ENCODE measurements at regions of chr22 and their contacts with region 1.

Region 1: DNA sequence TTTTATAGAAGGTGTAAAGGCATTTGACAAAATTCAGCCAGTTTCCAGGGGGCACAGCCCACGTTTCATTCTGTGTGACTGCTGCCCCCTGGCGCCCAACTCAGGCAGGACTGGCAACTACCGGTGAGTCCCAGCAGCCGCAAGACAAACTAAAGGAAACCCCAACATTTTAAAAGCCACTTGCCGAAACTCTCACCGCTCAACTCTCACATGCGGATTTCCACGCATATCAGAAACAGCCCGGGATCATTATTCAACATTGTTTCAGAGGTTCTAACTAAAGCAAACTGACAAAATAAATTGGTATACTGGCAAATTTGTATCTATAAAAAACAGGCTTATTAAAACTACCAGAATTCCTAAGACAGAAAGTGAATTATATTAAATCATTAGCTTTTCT is 48.2 kb downstream of the MORC2 start:
- DNase-seq: peak; percentile 40 to 90
- H3K4me3 ChIP-seq: no peak overlapping the region
- H3K4me1 ChIP-seq: peaks cover 5% of the 10 kb centered on the region; the same call in 1 of the 2 replicates
- H3K27me3 ChIP-seq: no peaks in the 10 kb centered on the region

Region 2: GRCh38 chr22:30511109-30511508 is 409.3 kb before region 1 on chr22:
- in situ Hi-C with region 1: no loop called
- DNase-seq: no peak
- H3K4me3 ChIP-seq: no peak overlapping the region
- H3K4me1 ChIP-seq: no peaks in the 10 kb centered on the region
- H3K27me3 ChIP-seq: no peaks in the 10 kb centered on the region

Region 3: DNA sequence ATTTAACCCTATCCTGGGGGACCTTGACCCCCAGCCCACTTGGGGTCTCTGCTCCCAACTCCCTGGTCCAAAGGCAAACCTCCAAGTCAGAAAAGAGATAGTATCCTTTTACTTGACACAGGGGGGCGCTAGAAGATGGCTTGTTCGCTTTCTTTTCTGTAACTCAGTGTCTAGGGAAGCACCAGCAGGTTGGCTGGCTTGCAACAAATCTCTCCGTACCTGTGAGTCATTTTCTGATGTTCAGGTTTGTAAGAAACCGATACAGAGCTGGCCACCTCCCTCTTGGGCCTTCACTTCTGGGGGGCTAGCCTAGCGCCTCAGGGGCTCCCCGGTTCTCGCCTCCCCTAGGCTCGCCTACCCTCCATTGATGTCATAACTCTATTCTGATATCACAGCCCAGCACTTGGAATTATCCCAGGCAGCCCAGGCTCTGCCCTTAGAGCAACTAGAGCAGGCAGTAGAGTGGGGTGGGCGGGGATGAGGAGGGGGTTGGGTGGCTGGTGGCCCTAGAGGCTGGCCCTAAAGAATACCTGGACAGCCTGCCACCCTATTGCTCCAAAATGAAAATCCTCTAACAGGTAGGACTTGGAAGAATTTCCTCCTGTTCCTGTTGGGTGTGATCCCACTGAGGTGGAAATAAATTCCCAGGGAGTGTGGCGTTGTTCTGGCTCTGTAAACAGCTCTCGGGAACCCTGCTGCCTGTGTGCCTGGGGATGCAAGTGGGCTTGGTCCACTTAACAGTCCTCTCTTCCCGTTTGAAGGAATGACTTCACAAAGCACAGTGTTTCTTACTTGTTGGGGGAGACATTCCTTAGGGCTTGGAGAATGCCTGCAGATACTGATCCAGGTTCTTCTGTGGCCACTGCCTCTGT is 156.4 kb before region 1 on chr22:
- in situ Hi-C with region 1: loop called (anchors 10 kb)
- DNase-seq: peak; percentile 65 to 68
- H3K4me3 ChIP-seq: no peak overlapping the region
- H3K4me1 ChIP-seq: no peaks in the 10 kb centered on the region
- H3K27me3 ChIP-seq: no peaks in the 10 kb centered on the region